ENCODE measurements at regions of chrX and their contacts with region 1.

Region 1: DNA sequence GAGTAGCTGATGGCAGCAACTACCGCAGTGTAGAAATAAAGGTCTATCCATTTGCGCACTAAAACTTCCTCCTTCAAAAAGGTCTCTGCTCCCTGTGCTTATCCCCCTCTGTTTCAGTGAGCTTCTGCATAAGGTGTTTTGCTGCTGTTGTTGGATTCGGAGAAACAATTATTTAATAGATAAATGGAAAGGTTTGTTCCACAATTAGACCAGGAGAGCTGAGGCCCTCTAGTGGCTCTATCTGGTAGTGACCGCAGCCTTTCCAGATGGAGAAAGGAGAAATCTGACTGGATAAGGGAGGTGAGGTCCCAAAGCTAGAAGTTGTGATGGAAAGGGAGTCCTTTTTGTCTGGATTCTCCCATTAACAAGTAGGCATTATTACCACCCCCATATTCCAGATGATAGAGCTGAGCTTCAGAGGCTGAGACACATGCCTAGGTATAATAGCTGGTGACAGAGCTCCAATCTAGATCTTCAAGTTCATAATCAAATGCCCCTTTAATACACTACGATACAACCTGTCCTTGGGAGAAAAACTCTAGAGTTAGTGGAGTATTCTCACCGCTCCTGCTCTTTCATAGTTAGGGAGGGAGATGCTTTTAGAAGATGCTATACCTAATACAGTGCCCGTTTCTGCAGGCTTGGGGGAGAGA is 5.1 kb upstream of the GABRQ start:
- ATAC-seq: peak in 2 of 8 experiments; percentile 20 to 37
- H3K4me3 ChIP-seq: no peak overlapping the region
- H3K27ac ChIP-seq: no peak overlapping the region
- H3K4me1 ChIP-seq: no peaks in the 10 kb centered on the region

Region 2: DNA sequence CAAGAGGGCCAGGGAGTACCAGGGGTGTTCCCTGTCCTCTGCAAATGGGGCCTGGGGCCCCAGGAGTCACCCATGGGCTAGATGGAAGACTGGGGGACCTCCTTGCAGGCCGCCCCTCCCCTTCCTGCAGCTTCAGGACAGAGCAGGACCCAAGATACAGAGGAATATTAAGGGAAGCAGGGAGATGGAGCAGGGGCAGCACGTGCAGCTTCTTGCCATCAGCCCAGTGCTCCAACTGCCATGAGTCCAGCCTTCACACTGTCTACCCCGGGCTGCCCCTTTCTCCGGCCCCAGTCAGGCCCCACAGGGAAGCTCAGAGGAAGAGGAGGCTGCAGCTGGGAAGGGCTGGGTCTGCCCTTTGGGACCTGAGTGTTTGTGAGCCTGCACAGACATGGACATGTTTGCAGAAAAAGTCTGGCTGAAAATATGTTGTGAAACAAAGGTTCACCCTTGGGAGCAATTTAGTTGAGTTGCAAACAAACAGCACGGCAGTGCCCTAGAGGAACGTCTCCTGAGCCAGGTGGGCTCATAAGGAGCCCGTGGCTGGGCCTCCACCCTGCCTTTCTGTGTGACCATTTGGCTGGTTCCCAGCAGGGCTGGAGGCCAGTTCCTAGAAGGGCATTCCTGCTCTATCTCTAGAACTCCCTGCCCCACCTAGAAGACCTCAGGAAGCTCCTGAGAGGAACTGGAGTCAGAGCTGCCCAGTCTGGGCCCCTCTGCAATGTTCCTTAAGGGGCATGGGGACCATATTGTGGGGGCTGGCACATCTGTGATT is 907.8 kb before region 1 on chrX:
- in situ Hi-C with region 1: loop called in 2 of 9 experiments (anchors 25 kb)
- ATAC-seq: no peak
- H3K4me3 ChIP-seq: no peak overlapping the region
- H3K27ac ChIP-seq: no peak overlapping the region
- H3K4me1 ChIP-seq: no peaks in the 10 kb centered on the region

Region 3: DNA sequence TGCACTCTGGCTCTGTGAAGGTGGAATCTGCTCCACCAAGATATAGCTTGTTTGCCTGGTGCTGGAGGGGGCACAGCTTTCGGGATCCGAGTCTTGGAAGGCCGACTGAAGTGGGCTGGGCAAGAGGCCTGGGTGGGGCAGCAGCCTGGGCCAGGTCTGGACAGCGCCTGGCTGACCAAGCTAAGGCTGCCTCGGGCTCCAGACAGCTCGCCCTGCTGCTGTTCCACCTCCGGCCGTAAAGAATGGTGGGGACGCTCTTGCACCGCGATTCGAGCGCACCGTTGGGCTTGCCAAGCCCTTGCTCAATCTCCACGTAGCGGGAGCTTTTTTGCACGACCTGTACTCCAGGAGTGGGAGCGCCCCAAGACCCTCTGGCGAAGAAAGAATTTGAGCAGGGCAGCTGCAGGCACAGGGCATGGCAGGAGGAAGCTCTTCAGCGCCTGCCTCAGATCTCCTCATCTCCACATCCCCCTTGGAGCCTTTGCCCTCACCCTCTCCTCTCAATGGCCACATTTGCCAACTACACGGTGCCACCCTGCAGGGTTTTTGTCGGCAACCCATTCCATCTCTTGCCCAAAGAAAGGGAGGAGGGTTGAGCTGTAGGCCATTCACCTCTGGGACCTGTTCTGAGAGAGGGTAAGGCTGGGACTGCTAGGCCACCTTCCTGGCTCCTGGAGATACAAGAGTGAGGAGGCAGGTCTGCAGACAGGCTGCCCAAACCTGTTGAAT is 879.1 kb before region 1 on chrX:
- in situ Hi-C with region 1: loop called in 7 of 9 experiments (anchors 25 kb)
- ATAC-seq: peak; percentile 53 to 95 (median 82)
- H3K4me3 ChIP-seq: no peak overlapping the region
- H3K27ac ChIP-seq: no peak overlapping the region
- H3K4me1 ChIP-seq: peaks cover 3 to 12% of the 10 kb centered on the region in 2 donors

Region 4: DNA sequence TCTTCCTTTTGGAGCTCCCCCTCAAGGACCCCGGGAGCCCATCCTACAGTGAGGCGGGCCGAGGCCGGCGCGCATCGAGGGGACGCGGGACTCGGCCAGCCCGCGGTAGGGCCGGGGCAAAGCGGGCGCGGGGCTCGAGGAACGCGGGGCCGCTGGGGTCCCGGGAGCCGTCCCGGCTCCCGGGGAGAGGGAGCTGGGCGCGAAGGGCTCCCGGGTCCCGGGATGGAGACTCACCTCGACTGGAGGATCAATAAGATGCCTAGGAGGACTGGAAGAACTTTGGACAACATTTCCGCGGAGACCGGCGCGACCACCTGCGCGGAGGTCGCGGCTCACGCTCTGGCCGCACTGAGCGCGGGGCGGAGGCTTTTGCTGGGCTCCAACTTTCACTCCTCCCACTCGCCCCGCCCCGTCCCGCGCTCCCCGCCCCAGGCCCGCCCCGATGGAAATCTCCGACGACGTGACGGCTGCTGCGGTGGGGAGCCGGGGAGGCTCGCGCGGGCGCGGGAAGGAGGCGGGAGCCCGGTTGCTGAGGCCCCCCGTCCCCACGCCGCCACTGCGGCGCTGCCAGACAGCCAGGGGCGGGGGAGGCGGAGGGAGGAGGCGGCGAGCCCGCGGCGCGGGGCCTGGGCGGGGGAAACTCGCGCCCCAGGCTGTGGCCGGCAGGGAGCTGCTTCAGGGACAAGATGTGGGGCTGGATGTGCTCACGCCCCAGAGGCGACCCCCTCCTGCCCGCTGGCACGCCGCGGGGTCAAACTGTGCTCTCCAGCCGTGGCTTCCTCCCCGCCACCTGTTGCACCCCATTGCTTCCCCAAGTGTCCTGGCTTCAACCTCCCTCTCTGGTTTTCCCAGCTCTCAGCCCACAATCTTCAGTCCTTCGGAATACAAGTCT is 658.0 kb before region 1 on chrX and contains the start of gene GABRE:
- in situ Hi-C with region 1: no loop called
- ATAC-seq: peak; percentile 64 to 93 (median 88)
- H3K4me3 ChIP-seq: peak within 1 kb of the TSS; percentile 28 to 35 (median 31)
- H3K27ac ChIP-seq: no peak within 1 kb of the TSS
- H3K4me1 ChIP-seq: no peaks in the 10 kb centered on the region
- total RNA-seq, gene GABRE: 0.16 to 40.0 (median 3.3) TPM

Region 5: DNA sequence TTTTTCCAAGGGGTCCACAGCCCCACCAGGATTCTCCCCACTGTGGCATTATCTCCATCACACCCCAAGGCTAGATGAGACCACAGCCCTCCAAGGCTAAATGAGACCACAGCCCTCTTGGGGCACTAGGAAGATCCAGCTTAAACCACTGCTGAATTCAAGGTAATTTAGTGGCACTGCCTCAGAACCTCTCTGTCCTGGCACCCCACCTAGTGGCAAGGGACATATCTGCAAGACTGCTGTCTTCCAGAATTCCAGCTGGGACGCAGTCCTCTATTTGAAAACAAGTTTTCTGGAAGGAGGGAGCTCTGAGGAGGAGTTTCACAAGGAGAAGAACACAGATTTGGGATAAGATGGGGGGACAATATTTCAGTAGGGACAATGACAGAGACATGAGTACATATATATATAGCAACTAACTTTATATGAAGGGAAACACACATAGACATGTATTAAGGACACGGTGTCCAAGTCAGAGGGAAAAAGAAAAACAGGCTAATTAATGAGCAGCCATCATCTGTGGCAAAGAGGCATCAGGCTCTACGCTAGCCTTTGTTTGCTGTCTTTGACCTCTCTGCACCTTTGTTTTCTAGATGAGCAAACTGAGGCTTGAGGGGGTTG is 188.7 kb after region 1 on chrX:
- in situ Hi-C with region 1: loop called in 2 of 9 experiments (anchors 25 kb)
- ATAC-seq: peak in 3 of 8 experiments; percentile 18 to 33 (median 25)
- H3K4me3 ChIP-seq: no peak overlapping the region
- H3K27ac ChIP-seq: no peak overlapping the region
- H3K4me1 ChIP-seq: no peaks in the 10 kb centered on the region

Measured in motor neuron (in vitro differentiated cells).